ENCODE measurements at regions of chr13 and their contacts with region 1.

Region 1: GRCh38 chr13:21686751-21687391 is 16.0 kb downstream of the FGF9 start:
- DNase-seq: peak; percentile 57
- ATAC-seq: peak; percentile 97
- H3K4me3 Mint-ChIP-seq: no peak overlapping the region
- H3K27ac Mint-ChIP-seq: no peak overlapping the region
- H3K4me1 Mint-ChIP-seq: peaks cover 10% of the 10 kb centered on the region
- H3K27me3 Mint-ChIP-seq: peaks cover 16% of the 10 kb centered on the region

Region 2: DNA sequence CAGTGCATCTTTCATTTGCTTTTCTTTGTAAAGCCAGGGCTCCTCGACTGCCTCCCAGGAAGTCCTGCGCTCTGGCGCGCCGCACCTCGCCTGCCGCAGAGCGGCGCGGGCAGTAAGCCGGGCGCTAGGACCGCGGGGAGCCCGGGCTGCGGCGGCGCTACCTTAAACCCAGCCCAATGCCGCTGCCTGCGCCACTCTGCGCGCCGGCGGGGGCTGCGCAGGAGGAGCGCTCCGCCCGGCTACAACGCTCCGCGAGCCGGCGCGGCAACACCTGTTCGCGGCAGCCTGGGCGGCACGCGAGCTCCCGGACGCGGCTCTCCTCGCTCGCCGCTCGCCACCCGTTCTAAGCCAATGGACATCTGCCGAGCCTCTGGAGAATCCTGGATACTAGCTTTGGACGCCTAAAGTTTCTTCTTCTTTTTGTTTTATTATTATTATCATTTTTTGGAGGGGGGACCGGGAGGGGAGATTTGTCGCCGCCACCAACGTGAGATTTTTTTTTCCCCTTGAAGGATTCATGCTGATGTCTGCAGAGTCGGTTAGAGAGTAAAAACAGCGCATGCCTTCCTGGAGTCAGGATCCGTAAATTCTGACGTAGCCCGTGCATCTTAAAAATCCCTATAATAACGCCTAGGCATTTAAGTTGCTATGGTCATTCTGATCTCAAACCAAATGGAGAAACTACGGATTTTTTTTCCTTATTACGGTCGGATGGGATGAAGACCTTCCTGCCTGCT is 15.8 kb before region 1 on chr13 and contains the start of gene FGF9:
- CTCF ChIA-PET with region 1: interaction called, 5 read pairs
- POLR2A ChIA-PET with region 1: no interaction called
- intact Hi-C with region 1: loop called in 1 of 2 experiments (anchors 2 kb)
- DNase-seq: peak; percentile 88
- ATAC-seq: peak; percentile 78
- H3K4me3 Mint-ChIP-seq: peak within 1 kb of the TSS; percentile 76
- H3K27ac Mint-ChIP-seq: peak within 1 kb of the TSS; percentile 53
- H3K4me1 Mint-ChIP-seq: peaks cover 45% of the 10 kb centered on the region
- H3K27me3 Mint-ChIP-seq: peaks cover 43% of the 10 kb centered on the region
- total RNA-seq, gene FGF9: 0.19 TPM in 1 of 2 experiments, not detected in the other